ENCODE measurements at regions of chr18 and their contacts with region 1.

Region 1: GRCh38 chr18:51197661-51198424 is at the start of gene MEX3C:
- DNase-seq: peak; percentile 99
- H3K4me3 Mint-ChIP-seq: peak within 1 kb of the TSS; percentile 96
- H3K27ac Mint-ChIP-seq: peak within 1 kb of the TSS; percentile 99
- H3K4me1 Mint-ChIP-seq: peaks cover 28% of the 10 kb centered on the region
- H3K27me3 Mint-ChIP-seq: no peaks in the 10 kb centered on the region
- total RNA-seq, gene MEX3C: 67.6 and 68.0 TPM in 2 replicates

Region 2: GRCh38 chr18:49486953-49487710 is 1710.7 kb before region 1 on chr18 and contains the start of gene C18orf32:
- intact Hi-C with region 1: loop called (anchors 2 kb)
- DNase-seq: peak; percentile 92
- H3K4me3 Mint-ChIP-seq: peak within 1 kb of the TSS; percentile 93
- H3K27ac Mint-ChIP-seq: peak within 1 kb of the TSS; percentile 98
- H3K4me1 Mint-ChIP-seq: peaks cover 53% of the 10 kb centered on the region
- H3K27me3 Mint-ChIP-seq: no peaks in the 10 kb centered on the region
- total RNA-seq, gene C18orf32: 28.7 and 31.2 TPM in 2 replicates

Region 3: GRCh38 chr18:50819728-50820378 is 378.0 kb before region 1 on chr18 and contains the start of gene MRO:
- intact Hi-C with region 1: loop called (anchors 5 kb)
- DNase-seq: peak; percentile 67
- H3K4me3 Mint-ChIP-seq: no peak within 1 kb of the TSS
- H3K27ac Mint-ChIP-seq: no peak within 1 kb of the TSS
- H3K4me1 Mint-ChIP-seq: no peaks in the 10 kb centered on the region
- H3K27me3 Mint-ChIP-seq: peaks cover 6% of the 10 kb centered on the region
- total RNA-seq, gene MRO: not detected in 2 replicates

Region 4: DNA sequence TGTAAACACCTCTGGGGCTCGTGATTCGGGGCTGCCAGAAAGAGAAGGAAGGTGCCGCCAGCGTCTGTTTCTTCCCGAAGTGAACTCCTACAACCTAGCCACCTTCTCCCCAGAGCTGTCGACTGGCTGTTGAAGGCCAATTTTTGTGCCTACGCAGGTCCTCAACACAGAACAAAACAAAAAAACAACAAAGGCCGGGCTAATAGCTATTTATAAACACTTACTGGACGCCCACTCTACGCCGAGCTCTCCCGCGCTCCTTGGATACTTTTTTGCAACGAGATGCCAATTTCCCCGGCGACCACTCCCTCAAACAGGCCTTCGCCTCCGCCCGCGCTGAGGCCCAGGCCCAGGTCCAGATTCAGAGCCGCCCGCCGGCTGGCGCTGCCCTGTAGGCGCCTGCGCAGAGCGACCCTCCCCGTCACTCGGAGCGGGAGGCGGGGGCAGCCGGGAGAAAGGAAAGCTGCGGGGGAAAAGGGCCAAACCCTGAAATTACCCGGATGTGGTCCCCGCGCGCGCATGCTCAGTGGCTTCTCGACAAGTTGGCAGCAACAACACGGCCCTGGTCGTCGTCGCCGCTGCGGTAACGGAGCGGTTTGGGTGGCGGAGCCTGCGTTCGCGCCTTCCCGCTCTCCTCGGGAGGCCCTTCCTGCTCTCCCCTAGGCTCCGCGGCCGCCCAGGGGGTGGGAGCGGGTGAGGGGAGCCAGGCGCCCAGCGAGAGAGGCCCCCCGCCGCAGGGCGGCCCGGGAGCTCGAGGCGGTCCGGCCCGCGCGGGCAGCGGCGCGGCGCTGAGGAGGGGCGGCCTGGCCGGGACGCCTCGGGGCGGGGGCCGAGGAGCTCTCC is 167.9 kb before region 1 on chr18 and contains the start of gene SMAD4:
- intact Hi-C with region 1: loop called (anchors 1 kb)
- DNase-seq: peak; percentile 97
- H3K4me3 Mint-ChIP-seq: peak within 1 kb of the TSS; percentile 99
- H3K27ac Mint-ChIP-seq: peak within 1 kb of the TSS; percentile 96
- H3K4me1 Mint-ChIP-seq: peaks cover 55% of the 10 kb centered on the region
- H3K27me3 Mint-ChIP-seq: no peaks in the 10 kb centered on the region
- total RNA-seq, gene SMAD4: 84.4 and 88.7 TPM in 2 replicates

Region 5: GRCh38 chr18:51153659-51154371 is 44.0 kb before region 1 on chr18:
- intact Hi-C with region 1: loop called (anchors 1 kb)
- DNase-seq: peak; percentile 38
- H3K4me3 Mint-ChIP-seq: peak overlapping the region; percentile 82
- H3K27ac Mint-ChIP-seq: peak overlapping the region; percentile 96
- H3K4me1 Mint-ChIP-seq: peaks cover 48% of the 10 kb centered on the region
- H3K27me3 Mint-ChIP-seq: no peaks in the 10 kb centered on the region

Region 6: GRCh38 chr18:51235011-51235789 is 37.4 kb after region 1 on chr18:
- intact Hi-C with region 1: loop called (anchors 1 kb)
- DNase-seq: peak; percentile 11
- H3K4me3 Mint-ChIP-seq: peak overlapping the region; percentile 16
- H3K27ac Mint-ChIP-seq: peak overlapping the region; percentile 48
- H3K4me1 Mint-ChIP-seq: peaks cover 31% of the 10 kb centered on the region
- H3K27me3 Mint-ChIP-seq: no peaks in the 10 kb centered on the region